ENCODE measurements at regions of chr7 and their contacts with region 1.

Region 1: GRCh38 chr7:5143935-5144903 is 45.8 kb upstream of the WIPI2 start:
- DNase-seq: peak; percentile 38 to 94 (median 81)
- ATAC-seq: peak; percentile 77 to 90 (median 82)
- H3K4me3 ChIP-seq: peak overlapping the region; percentile 38 to 46
- H3K4me3 Mint-ChIP-seq: peak overlapping the region; percentile 64 to 97 (median 76)
- H3K27ac ChIP-seq: peak overlapping the region; percentile 61
- H3K27ac Mint-ChIP-seq: peak overlapping the region; percentile 59 to 76
- H3K4me1 ChIP-seq: peaks cover 3 to 20% of the 10 kb centered on the region in 2 experiments
- H3K4me1 Mint-ChIP-seq: peaks cover 14 to 27% (median 16%) of the 10 kb centered on the region in 3 donors
- H3K27me3 ChIP-seq: peaks cover 0 to 4% of the 10 kb centered on the region in 2 experiments
- H3K27me3 Mint-ChIP-seq: peaks cover 0 to 7% of the 10 kb centered on the region in 2 donors

Region 2: DNA sequence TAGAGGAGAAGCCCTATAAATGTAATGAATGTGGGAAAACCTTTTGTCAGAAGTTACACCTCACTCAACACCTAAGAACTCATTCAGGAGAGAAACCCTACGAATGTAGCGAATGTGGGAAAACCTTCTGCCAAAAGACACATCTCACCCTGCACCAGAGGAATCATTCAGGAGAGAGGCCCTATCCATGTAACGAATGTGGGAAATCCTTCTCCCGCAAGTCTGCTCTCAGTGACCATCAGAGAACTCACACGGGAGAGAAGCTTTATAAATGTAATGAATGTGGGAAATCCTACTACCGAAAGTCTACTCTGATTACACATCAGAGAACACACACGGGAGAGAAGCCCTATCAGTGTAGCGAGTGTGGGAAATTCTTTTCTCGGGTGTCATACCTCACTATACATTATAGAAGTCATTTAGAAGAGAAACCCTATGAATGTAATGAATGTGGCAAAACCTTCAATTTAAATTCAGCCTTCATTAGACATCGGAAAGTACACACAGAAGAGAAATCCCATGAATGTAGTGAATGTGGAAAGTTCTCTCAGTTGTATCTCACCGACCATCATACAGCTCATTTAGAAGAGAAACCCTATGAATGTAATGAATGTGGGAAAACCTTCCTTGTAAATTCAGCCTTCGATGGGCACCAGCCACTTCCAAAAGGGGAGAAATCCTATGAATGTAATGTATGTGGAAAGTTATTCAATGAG is 79.7 kb before region 1 on chr7:
- CTCF ChIA-PET with region 1: no interaction called
- POLR2A ChIA-PET with region 1: no interaction called
- DNase-seq: no peak
- ATAC-seq: no peak
- H3K4me3 ChIP-seq: no peak overlapping the region
- H3K4me3 Mint-ChIP-seq: no peak overlapping the region
- H3K27ac ChIP-seq: no peak overlapping the region
- H3K27ac Mint-ChIP-seq: no peak overlapping the region
- H3K4me1 ChIP-seq: no peaks in the 10 kb centered on the region
- H3K4me1 Mint-ChIP-seq: no peaks in the 10 kb centered on the region
- H3K27me3 ChIP-seq: no peaks in the 10 kb centered on the region
- H3K27me3 Mint-ChIP-seq: no peaks in the 10 kb centered on the region

Region 3: GRCh38 chr7:5177060-5177459 is 32.8 kb after region 1 on chr7:
- CTCF ChIA-PET with region 1: interaction called in 1 of 2 experiments, 5 read pairs
- POLR2A ChIA-PET with region 1: interaction called in 1 of 2 experiments, 13 read pairs
- DNase-seq: no peak
- ATAC-seq: no peak
- H3K4me3 ChIP-seq: no peak overlapping the region
- H3K4me3 Mint-ChIP-seq: no peak overlapping the region
- H3K27ac ChIP-seq: no peak overlapping the region
- H3K27ac Mint-ChIP-seq: no peak overlapping the region
- H3K4me1 ChIP-seq: peaks cover 0 to 5% of the 10 kb centered on the region in 2 experiments
- H3K4me1 Mint-ChIP-seq: peaks cover 0 to 8% (median 0%) of the 10 kb centered on the region in 3 donors
- H3K27me3 ChIP-seq: peaks cover 0 to 11% of the 10 kb centered on the region in 2 experiments
- H3K27me3 Mint-ChIP-seq: no peaks in the 10 kb centered on the region

Region 4: DNA sequence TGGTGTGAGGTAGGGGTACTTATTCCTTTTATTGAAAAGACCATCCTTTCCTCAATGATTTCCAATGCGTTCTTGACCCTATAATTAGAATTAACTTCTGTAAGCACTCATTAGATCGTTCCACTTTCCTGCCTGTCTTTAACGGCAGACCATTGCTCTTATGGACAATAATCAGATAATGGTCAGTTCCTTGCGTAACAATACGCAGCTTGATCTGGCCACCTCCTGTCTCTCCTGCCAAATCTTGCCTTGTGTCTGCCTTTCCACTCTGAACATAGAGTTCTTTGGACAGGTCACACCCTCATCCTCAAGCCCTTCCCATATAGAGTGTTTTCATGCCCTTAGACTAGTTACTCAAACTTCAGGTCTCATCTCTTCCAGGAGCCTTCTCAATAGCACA is 43.4 kb after region 1 on chr7:
- CTCF ChIA-PET with region 1: no interaction called
- POLR2A ChIA-PET with region 1: interaction called in 1 of 2 experiments, 10 read pairs
- DNase-seq: no peak
- ATAC-seq: no peak
- H3K4me3 ChIP-seq: no peak overlapping the region
- H3K4me3 Mint-ChIP-seq: no peak overlapping the region
- H3K27ac ChIP-seq: no peak overlapping the region
- H3K27ac Mint-ChIP-seq: no peak overlapping the region
- H3K4me1 ChIP-seq: peaks cover 12 to 21% of the 10 kb centered on the region in 2 experiments
- H3K4me1 Mint-ChIP-seq: peaks cover 20 to 32% (median 21%) of the 10 kb centered on the region in 3 donors
- H3K27me3 ChIP-seq: peaks cover 0 to 6% of the 10 kb centered on the region in 2 experiments
- H3K27me3 Mint-ChIP-seq: peaks cover 0 to 3% of the 10 kb centered on the region in 2 donors

Measured in T-cell (primary cell).